Endothelial cell of umbilical vein (primary cell): ENCODE measurements at regions of chr5 and their contacts with region 1.

Region 1: DNA sequence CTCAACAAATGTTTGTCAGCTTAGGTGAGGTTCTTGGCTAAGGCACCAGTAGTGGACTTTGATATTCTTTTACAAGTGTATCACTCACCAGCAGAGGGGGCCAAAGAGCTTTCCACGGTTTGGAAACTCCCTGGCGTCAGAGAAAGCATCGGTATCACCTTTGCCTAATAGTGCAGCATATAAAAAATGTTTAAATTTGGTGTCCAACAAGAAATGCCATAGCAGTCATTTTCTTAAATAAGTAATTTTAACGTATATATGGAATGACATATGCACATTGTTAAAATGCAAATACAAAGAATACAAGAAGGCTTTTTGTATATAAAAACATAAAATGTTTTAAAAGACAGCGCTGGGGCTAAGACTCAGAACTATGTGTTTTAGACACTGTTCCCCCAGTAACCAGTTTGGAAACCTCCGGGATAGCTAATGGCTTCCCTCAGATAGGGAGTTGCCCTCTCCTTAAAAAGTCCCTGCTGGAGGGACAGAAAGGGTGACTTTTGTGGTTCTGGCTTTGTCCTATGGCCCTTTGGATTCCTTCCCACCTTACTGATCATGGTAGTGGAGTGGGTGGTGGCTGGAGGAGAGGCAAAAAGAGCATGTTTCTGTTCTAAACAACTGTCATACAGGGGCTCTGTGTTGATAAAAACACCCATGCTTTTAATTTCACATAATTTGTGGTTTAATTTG is 124.6 kb downstream of the GPBP1 start:
- DNase-seq: peak; percentile 86
- H3K4me3 ChIP-seq: no peak overlapping the region
- H3K27ac ChIP-seq: peak overlapping the region; percentile 47
- H3K4me1 ChIP-seq: peaks cover 10% of the 10 kb centered on the region
- H3K27me3 ChIP-seq: no peaks in the 10 kb centered on the region
- CTCF ChIP-seq: peak; percentile 72 to 73
- POLR2A ChIP-seq: no peak

Region 2: DNA sequence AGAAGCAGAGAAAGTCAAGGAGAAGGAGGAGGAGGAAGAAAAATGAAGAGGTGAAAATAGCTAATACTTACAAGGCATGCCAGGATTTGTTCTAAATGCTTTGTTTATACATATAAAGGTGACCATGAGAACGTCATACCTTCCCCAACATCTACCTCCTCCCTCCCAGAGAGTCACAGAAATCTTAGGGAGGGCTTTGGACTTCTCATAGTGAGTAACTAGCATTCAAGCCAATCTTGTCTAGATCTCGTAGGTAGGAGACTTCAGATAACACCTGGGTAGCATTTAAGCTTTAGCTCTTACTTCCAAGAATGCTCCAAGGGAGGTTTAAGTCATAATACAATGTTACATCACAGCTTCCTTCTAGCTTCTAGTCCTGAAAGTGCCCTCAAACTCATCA is 161.0 kb before region 1 on chr5:
- CTCF ChIA-PET with region 1: no interaction called
- POLR2A ChIA-PET with region 1: no interaction called
- dilution Hi-C with region 1: no loop called
- intact Hi-C with region 1: no loop called
- DNase-seq: no peak
- H3K4me3 ChIP-seq: no peak overlapping the region
- H3K27ac ChIP-seq: no peak overlapping the region
- H3K4me1 ChIP-seq: no peaks in the 10 kb centered on the region
- H3K27me3 ChIP-seq: no peaks in the 10 kb centered on the region
- CTCF ChIP-seq: no peak
- POLR2A ChIP-seq: no peak

Region 3: GRCh38 chr5:57267805-57268204 is 30.6 kb before region 1 on chr5:
- CTCF ChIA-PET with region 1: no interaction called
- POLR2A ChIA-PET with region 1: no interaction called
- dilution Hi-C with region 1: no loop called
- intact Hi-C with region 1: no loop called
- DNase-seq: no peak
- H3K4me3 ChIP-seq: no peak overlapping the region
- H3K27ac ChIP-seq: no peak overlapping the region
- H3K4me1 ChIP-seq: no peaks in the 10 kb centered on the region
- H3K27me3 ChIP-seq: peaks cover 0 to 2% of the 10 kb centered on the region in 2 experiments
- CTCF ChIP-seq: no peak
- POLR2A ChIP-seq: no peak

Region 4: DNA sequence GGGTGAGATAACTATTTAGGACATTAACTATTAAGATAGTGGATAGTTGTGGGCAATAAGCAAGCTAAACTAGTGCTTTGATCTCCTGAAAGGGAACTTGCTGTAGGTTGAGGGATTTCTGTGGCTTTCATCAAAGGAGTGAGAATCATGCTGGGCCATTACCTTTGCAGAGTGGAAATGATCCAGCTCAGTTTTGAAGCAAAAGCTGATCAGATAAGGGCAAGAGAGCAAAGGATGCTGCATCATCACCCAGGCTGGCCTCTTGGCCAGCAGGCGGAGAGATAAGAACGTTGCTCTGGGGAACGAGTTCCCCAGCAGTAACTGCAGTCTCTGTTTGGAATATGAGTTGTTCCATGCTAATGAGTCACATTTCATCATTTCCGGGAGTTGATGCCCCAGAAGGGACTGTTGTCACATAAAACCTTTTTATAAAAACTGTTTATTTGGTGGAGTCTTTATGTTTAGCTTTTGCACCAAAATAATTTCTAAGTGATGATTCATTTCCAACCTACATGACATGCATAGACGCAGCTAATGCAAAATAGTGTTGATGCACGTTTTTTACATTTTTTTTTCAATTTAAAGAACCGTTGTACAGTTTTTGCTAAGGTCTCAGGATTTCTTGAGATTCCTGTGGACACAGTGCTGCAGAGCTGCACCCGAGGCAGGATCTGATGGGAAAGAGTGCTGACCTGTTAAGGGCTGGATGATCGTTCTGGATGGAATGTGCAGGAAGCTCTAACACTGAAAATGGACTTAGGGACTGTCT is 84.8 kb after region 1 on chr5:
- CTCF ChIA-PET with region 1: interaction called, 6 read pairs
- POLR2A ChIA-PET with region 1: no interaction called
- dilution Hi-C with region 1: no loop called
- intact Hi-C with region 1: loop called (anchors 1 kb)
- DNase-seq: peak; percentile 96
- H3K4me3 ChIP-seq: peak overlapping the region in 1 of 3 experiments; percentile 40
- H3K27ac ChIP-seq: peak overlapping the region; percentile 94
- H3K4me1 ChIP-seq: peaks cover 19% of the 10 kb centered on the region
- H3K27me3 ChIP-seq: no peaks in the 10 kb centered on the region
- CTCF ChIP-seq: peak in 1 of 2 donors; percentile 33
- POLR2A ChIP-seq: peak; percentile 60

Region 5: DNA sequence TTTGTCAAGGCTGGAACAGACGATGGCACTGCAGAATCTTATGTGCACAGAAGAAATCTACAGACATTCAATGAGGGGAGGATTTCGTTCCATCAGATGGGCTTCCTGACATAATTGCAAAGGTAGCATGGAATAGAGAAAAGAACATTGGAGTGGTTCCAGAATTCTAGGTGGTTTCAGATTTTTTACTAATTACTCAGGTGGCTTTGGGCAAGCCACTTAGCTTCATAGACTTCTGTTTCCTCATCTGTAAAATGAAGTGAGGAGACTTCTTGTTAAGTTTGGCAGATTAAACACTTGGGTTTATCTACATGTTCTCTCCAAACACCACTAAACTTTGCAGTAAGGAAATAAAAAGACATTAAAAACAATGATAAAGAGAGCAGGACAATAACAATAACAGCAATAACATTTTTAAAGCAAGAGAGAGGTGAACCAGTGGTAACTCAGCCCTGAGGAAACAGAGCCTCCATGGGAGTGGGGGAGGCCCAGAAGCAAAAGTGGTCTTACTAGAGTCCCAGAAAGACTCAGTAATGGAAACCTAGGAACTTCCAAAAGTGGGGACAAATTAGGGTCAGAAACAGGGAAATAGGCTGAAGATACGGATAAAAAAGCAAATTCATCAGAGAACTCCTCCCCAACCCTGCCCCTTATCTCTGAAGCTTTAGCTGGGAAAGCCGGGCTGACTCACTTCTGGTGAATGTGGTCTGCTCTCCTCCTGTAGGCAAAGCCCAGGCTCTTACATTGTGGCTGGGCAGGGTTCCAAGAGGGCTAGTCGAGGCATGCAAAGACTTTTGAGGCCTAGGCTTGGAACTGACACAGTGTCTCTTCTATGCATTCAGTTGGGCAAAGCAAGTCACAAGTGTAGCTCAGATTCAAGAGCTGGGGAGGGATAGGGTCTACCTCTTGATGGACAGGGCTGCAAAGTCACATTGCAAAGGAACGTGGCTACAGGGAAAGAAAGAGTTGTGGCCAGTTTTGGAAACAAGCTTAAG is 196.0 kb after region 1 on chr5:
- CTCF ChIA-PET with region 1: interaction called, 40 read pairs
- POLR2A ChIA-PET with region 1: interaction called, 3 read pairs
- dilution Hi-C with region 1: no loop called
- intact Hi-C with region 1: loop called (anchors 1 kb)
- DNase-seq: peak; percentile 93
- H3K4me3 ChIP-seq: no peak overlapping the region
- H3K27ac ChIP-seq: peak overlapping the region; percentile 92
- H3K4me1 ChIP-seq: peaks cover 48% of the 10 kb centered on the region
- H3K27me3 ChIP-seq: no peaks in the 10 kb centered on the region
- CTCF ChIP-seq: no peak
- POLR2A ChIP-seq: no peak

Region 6: GRCh38 chr5:57608542-57608941 is 310.1 kb after region 1 on chr5:
- CTCF ChIA-PET with region 1: no interaction called
- POLR2A ChIA-PET with region 1: no interaction called
- dilution Hi-C with region 1: no loop called
- intact Hi-C with region 1: loop called (anchors 5 kb)
- DNase-seq: no peak
- H3K4me3 ChIP-seq: no peak overlapping the region
- H3K27ac ChIP-seq: no peak overlapping the region
- H3K4me1 ChIP-seq: no peaks in the 10 kb centered on the region
- H3K27me3 ChIP-seq: no peaks in the 10 kb centered on the region
- CTCF ChIP-seq: no peak
- POLR2A ChIP-seq: no peak

Region 7: DNA sequence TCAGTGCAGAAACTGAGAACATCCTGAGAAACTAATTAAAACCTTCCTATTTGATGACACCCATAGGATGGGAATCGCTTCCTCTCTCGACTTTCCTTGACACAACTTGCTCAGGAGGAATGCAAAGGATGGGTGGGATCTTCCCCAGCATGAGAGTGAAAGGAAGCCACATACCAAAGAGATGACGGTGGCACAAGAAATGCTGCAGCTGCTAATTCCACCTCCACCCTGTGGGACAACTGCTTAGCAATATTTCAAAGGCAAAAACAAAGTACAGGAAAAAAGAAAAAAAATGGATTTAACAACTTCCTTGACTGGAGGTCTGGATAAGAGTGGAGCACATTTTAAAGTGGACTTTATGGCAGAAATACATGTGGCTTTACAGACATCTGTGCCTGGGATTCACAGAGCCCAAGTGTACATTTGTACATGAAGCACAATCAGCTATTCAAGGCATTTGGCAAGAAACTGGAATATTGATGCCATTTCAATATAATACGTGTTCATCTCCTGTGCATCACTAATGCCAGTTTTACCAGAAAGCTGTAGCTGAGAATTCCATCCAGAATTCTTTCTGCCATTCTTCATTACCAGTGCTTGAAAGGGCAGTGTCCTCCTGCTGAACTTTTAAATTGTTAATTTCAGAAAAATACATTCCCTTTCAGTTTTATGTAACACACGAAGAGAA is 543.4 kb after region 1 on chr5:
- CTCF ChIA-PET with region 1: interaction called, 4 read pairs
- POLR2A ChIA-PET with region 1: no interaction called
- dilution Hi-C with region 1: no loop called
- intact Hi-C with region 1: loop called (anchors 2 kb)
- DNase-seq: peak; percentile 96
- H3K4me3 ChIP-seq: no peak overlapping the region
- H3K27ac ChIP-seq: peak overlapping the region; percentile 90
- H3K4me1 ChIP-seq: peaks cover 66% of the 10 kb centered on the region
- H3K27me3 ChIP-seq: no peaks in the 10 kb centered on the region
- CTCF ChIP-seq: no peak
- POLR2A ChIP-seq: no peak

Region 8: GRCh38 chr5:58025809-58026208 is 727.4 kb after region 1 on chr5:
- CTCF ChIA-PET with region 1: no interaction called
- POLR2A ChIA-PET with region 1: no interaction called
- dilution Hi-C with region 1: no loop called
- intact Hi-C with region 1: no loop called
- DNase-seq: no peak
- H3K4me3 ChIP-seq: no peak overlapping the region
- H3K27ac ChIP-seq: no peak overlapping the region
- H3K4me1 ChIP-seq: no peaks in the 10 kb centered on the region
- H3K27me3 ChIP-seq: no peaks in the 10 kb centered on the region
- CTCF ChIP-seq: no peak
- POLR2A ChIP-seq: no peak

Region 9: GRCh38 chr5:58240286-58240685 is 941.8 kb after region 1 on chr5:
- CTCF ChIA-PET with region 1: interaction called, 8 read pairs
- POLR2A ChIA-PET with region 1: no interaction called
- dilution Hi-C with region 1: no loop called
- intact Hi-C with region 1: loop called (anchors 2 kb)
- DNase-seq: peak; percentile 89
- H3K4me3 ChIP-seq: no peak overlapping the region
- H3K27ac ChIP-seq: peak overlapping the region; percentile 89
- H3K4me1 ChIP-seq: peaks cover 54% of the 10 kb centered on the region
- H3K27me3 ChIP-seq: no peaks in the 10 kb centered on the region
- CTCF ChIP-seq: no peak
- POLR2A ChIP-seq: no peak

Region 10: DNA sequence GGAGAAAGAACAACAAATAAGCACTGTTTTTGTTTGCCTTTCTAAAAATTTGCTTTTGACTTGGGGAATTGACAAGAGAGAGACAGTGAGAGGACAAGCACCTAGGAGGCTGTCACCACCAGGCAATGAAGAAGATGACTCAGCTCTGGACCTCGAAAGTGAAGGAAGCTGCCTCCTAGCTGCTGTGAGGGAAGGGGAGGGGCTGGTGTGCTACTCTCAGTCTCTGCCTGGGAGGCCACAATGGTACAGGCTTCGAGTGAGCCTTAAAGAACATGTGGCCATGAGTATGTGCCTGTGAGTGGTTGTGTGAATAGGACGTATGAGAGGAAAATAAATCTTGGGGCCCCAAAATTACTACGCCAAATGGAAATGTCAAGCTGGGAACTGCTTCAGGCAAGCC is 1168.5 kb after region 1 on chr5:
- CTCF ChIA-PET with region 1: interaction called, 93 read pairs
- POLR2A ChIA-PET with region 1: interaction called, 17 read pairs
- dilution Hi-C with region 1: no loop called
- intact Hi-C with region 1: loop called (anchors 1 kb)
- DNase-seq: peak; percentile 9
- H3K4me3 ChIP-seq: no peak overlapping the region
- H3K27ac ChIP-seq: no peak overlapping the region
- H3K4me1 ChIP-seq: peaks cover 7% of the 10 kb centered on the region
- H3K27me3 ChIP-seq: no peaks in the 10 kb centered on the region
- CTCF ChIP-seq: no peak
- POLR2A ChIP-seq: no peak